Dendritic cell treated with granulocyte-macrophage colony-stimulating factor and Interleukin-4, amounts not matched to agents 40 ng/mL and 50 ng/mL, for 4 days (primary cell): ENCODE measurements at regions of chr16 and their contacts with region 1.

Region 1: GRCh38 chr16:9008601-9009260 is 45.0 kb upstream of the USP7 start:
- H3K4me3 Mint-ChIP-seq: peak overlapping the region; percentile 46
- H3K27ac Mint-ChIP-seq: no peak overlapping the region
- H3K4me1 Mint-ChIP-seq: peaks cover 16% of the 10 kb centered on the region
- H3K27me3 Mint-ChIP-seq: peaks cover 28% of the 10 kb centered on the region

Region 2: DNA sequence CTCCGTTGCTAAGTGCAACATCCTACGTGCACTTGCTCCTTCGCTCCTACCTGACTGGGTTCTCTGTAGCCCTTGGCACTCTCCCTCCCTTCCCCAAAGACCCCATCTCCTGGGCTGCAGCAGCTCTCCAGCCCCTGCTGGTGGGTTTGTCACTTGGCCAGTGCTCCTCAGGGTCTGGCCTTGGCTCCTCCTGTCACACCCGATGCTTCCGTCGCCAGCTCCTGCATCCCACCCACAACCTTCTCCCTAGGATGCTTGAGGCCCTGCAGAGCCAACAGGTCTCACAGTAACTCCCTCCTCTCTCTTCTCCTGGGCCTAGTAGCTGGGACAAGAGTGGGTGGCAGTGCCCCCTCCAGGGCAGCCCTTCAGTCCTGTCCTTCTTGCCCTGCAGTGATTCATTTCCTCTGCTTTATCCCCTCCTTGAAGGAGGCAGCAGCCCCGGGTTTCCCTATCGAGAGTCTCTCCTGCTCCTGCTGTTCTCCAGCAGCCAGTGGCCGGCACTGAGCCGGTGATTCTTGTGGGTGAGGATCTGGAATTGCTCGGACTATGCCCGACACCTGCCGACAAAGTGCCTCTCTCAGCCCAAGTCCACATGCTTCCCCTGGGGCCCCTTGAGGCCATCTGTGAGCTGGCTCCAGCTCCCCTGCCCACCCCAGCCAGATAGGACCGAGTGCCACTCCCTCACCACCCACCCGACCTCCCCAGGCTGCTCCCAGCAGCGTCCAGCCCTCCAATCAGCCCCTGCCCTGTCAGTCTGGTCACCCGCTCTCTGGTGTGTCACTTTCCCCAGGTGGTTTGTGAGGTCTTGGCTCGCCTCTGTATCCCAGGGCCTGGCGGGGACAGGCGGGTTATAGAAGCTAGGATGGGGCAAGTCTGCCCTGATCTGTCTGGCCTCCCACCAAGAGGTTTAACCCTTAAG is 122.8 kb before region 1 on chr16:
- intact Hi-C with region 1: no loop called
- H3K4me3 Mint-ChIP-seq: no peak overlapping the region
- H3K27ac Mint-ChIP-seq: no peak overlapping the region
- H3K4me1 Mint-ChIP-seq: peaks cover 7% of the 10 kb centered on the region
- H3K27me3 Mint-ChIP-seq: peaks cover 24% of the 10 kb centered on the region

Region 3: GRCh38 chr16:8963825-8964441 is 44.8 kb before region 1 on chr16 and contains the start of gene USP7:
- intact Hi-C with region 1: loop called (anchors 5 kb)
- H3K4me3 Mint-ChIP-seq: peak within 1 kb of the TSS; percentile 86
- H3K27ac Mint-ChIP-seq: peak within 1 kb of the TSS; percentile 84
- H3K4me1 Mint-ChIP-seq: peaks cover 61% of the 10 kb centered on the region
- H3K27me3 Mint-ChIP-seq: no peaks in the 10 kb centered on the region